ENCODE measurements at regions of chr15 and their contacts with region 1.

Region 1: GRCh38 chr15:78149068-78149804 is at the start of gene IDH3A:
- DNase-seq: peak; percentile 100
- H3K4me3 ChIP-seq: peak within 1 kb of the TSS; percentile 63 to 98 (median 78)
- H3K27ac ChIP-seq: peak within 1 kb of the TSS; percentile 88 to 96 (median 91)
- H3K4me1 ChIP-seq: peaks cover 0 to 28% (median 19%) of the 10 kb centered on the region in 4 donors
- H3K27me3 ChIP-seq: no peaks in the 10 kb centered on the region
- CTCF ChIP-seq: no peak
- EP300 ChIP-seq: no peak
- POLR2A ChIP-seq: peak; percentile 39 to 45
- total RNA-seq, gene IDH3A: 74.9 to 106 (median 93.9) TPM

Region 2: DNA sequence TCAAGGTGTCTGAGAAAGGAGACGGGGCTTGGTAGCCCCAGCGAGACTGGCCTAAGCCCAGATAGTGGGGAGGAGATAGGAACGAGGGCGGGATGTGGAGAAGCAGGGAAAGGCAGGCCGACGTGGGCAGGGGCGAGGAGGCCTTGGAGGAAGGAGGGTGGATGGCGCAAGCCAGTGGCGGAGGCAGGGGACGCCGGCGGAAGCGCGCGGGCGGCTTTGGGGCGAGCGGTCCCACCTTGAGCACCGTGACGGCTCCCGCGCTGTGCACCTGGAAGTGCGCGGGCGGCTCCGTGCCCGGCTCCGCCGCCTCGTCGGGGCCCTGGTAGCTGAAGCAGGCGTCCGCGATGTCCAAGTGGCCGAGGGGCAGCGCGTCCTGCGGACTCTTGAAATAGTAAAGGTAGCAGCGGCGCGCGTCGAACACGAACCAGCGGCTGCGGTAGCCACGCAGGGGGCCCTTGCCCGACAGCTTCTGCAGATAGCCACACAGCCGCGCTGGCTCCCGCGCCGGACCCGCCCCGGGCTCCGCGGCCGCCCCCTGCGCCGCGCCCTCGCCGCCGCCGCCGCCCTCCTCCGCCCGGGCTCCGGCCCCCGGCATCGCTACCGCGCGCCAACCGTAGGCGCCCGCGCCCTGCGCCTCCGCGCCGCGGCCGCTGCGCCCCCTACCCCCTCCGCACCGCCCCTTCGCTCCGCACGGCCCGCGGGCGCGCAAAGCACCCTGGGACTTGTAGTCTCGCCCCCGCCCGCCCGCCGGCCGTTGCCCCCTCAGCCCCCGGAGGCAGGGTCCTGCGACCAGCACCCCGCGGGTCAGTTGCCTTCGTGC is 72.0 kb before region 1 on chr15 and contains the start of gene TBC1D2B:
- intact Hi-C with region 1: no loop called
- DNase-seq: peak; percentile 82
- H3K4me3 ChIP-seq: peak within 1 kb of the TSS; percentile 69 to 97 (median 95)
- H3K27ac ChIP-seq: peak within 1 kb of the TSS; percentile 90 to 96 (median 92)
- H3K4me1 ChIP-seq: peaks cover 0 to 48% (median 39%) of the 10 kb centered on the region in 4 donors
- H3K27me3 ChIP-seq: no peaks in the 10 kb centered on the region
- CTCF ChIP-seq: peak in 1 of 4 experiments; percentile 8
- EP300 ChIP-seq: no peak
- POLR2A ChIP-seq: no peak
- total RNA-seq, gene TBC1D2B: 25.3 to 47.1 (median 37.6) TPM

Region 3: GRCh38 chr15:78131295-78132061 is 17.8 kb before region 1 on chr15 and contains the start of gene CIB2:
- intact Hi-C with region 1: loop called (anchors 1 kb)
- DNase-seq: peak; percentile 84
- H3K4me3 ChIP-seq: peak within 1 kb of the TSS; percentile 64 to 89 (median 68)
- H3K27ac ChIP-seq: peak within 1 kb of the TSS; percentile 81 to 86 (median 83)
- H3K4me1 ChIP-seq: peaks cover 0 to 16% (median 13%) of the 10 kb centered on the region in 4 donors
- H3K27me3 ChIP-seq: no peaks in the 10 kb centered on the region
- CTCF ChIP-seq: peak; percentile 36 to 79 (median 42)
- EP300 ChIP-seq: no peak
- POLR2A ChIP-seq: no peak
- total RNA-seq, gene CIB2: 3.5 to 11.7 (median 10.4) TPM

Measured in sigmoid colon (tissue), 7 donors.